ENCODE measurements at regions of chr4 and their contacts with region 1.

Region 1: DNA sequence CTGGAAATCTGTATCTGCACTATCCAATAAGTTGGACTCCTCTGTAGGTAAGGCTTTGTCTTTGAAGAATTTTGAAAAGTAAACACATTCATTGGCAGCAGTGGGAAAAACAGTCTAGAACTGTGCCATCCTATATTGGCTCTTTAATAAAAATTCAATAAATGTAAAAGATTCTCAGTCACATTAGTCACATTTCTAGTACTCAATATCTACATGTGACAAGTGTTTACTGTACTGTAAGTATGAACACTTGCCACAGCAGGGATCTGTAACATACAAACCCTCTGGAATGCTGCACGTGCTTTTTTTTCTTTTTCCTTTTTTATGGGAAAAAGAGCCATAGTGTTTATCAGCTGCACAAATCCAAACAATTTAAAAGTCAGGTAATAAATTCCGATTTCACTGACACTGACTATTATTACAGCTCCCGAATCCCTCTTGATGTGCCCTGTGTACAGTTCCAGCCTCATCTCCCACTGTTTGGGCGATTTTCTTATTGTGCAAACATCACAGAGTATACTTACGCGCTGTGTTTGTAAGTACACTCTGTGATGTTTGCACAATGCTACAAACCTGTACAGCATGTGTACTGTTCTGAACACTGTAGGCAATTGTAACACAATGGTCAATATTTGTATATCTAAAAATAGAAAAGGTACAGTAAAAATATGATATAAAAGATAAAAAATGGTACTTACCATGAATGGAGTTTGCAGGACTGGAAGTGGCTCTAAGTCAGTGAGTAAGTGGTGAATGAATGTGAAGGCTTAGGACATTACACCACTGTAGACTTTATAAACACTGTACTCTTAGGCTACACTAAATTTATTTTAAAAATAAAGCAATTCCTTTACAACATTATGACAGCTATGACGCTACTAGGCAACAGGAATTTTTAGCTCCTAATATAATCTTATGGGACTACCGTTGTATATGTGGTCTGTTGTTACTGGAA is 8.7 kb downstream of the PYURF start:
- DNase-seq: no peak
- ATAC-seq: no peak
- H3K4me3 ChIP-seq: no peak overlapping the region
- H3K4me3 Mint-ChIP-seq: no peak overlapping the region
- H3K27ac ChIP-seq: no peak overlapping the region
- H3K27ac Mint-ChIP-seq: no peak overlapping the region
- H3K4me1 ChIP-seq: no peaks in the 10 kb centered on the region
- H3K4me1 Mint-ChIP-seq: no peaks in the 10 kb centered on the region
- H3K27me3 ChIP-seq: no peaks in the 10 kb centered on the region
- H3K27me3 Mint-ChIP-seq: peaks cover 4% of the 10 kb centered on the region
- CTCF ChIP-seq: no peak

Region 2: GRCh38 chr4:87679449-87680169 is 835.2 kb before region 1 on chr4:
- CTCF ChIA-PET with region 1: interaction called, 5 read pairs
- POLR2A ChIA-PET with region 1: no interaction called
- intact Hi-C with region 1: loop called in 1 of 2 experiments (anchors 10 kb)
- DNase-seq: peak in 7 of 9 experiments; percentile 9 to 57 (median 22)
- ATAC-seq: no peak
- H3K4me3 ChIP-seq: no peak overlapping the region
- H3K4me3 Mint-ChIP-seq: no peak overlapping the region
- H3K27ac ChIP-seq: no peak overlapping the region
- H3K27ac Mint-ChIP-seq: no peak overlapping the region
- H3K4me1 ChIP-seq: no peaks in the 10 kb centered on the region
- H3K4me1 Mint-ChIP-seq: no peaks in the 10 kb centered on the region
- H3K27me3 ChIP-seq: no peaks in the 10 kb centered on the region
- H3K27me3 Mint-ChIP-seq: peaks cover 2% of the 10 kb centered on the region
- CTCF ChIP-seq: peak; percentile 83

Region 3: DNA sequence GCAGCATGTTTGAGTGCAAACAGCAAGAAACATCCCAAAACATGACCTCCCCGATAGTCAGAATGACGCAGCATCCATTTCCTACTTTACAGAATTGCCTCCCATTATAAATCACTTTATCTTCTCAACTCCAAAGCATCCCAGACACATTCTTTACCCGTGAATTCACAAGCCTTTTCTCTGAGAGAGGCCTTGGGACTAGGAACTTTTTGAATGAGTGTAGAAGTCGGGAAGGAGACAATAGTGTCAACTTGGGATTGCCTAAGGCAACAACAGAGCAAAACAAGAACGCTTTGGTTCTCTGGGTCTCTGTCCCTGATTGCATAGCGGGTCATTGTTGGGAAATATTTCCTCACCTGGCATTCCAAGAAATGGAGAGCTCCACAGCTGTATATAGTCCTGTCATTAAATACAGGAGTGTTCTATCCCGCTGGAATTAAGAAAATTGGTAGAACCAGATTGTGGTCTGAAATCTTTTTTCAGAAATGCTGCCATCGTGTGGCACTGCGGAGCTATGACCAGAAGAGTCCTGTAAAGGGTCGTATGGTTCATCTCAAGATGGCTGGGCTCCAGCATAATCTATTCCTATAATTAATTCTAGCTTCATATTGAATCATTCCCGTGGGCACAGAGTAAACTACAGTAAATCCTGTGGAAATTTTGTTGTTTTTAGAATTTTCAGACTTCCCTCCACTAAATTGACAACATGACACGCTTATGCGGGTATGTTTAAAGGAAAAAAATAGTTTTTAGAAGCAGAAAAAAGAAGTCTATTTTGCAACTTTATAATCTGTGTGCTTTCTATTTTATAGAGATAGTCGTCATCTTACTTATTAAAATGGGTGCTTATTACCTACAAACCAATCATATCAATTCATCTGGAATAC is 541.3 kb before region 1 on chr4:
- CTCF ChIA-PET with region 1: interaction called, 4 read pairs
- POLR2A ChIA-PET with region 1: no interaction called
- intact Hi-C with region 1: loop called in 1 of 2 experiments (anchors 10 kb)
- DNase-seq: peak in 5 of 9 experiments; percentile 16 to 53 (median 42)
- ATAC-seq: peak; percentile 74
- H3K4me3 ChIP-seq: no peak overlapping the region
- H3K4me3 Mint-ChIP-seq: no peak overlapping the region
- H3K27ac ChIP-seq: no peak overlapping the region
- H3K27ac Mint-ChIP-seq: no peak overlapping the region
- H3K4me1 ChIP-seq: peaks cover 6% of the 10 kb centered on the region
- H3K4me1 Mint-ChIP-seq: peaks cover 12% of the 10 kb centered on the region
- H3K27me3 ChIP-seq: peaks cover 0 to 4% of the 10 kb centered on the region in 2 experiments
- H3K27me3 Mint-ChIP-seq: peaks cover 27% of the 10 kb centered on the region
- CTCF ChIP-seq: peak; percentile 66

Region 4: GRCh38 chr4:88033309-88033708 is 481.5 kb before region 1 on chr4:
- CTCF ChIA-PET with region 1: no interaction called
- POLR2A ChIA-PET with region 1: no interaction called
- intact Hi-C with region 1: loop called (anchors 1 to 2 kb)
- DNase-seq: peak in 4 of 9 experiments; percentile 19 to 71 (median 44)
- ATAC-seq: no peak
- H3K4me3 ChIP-seq: no peak overlapping the region
- H3K4me3 Mint-ChIP-seq: no peak overlapping the region
- H3K27ac ChIP-seq: no peak overlapping the region
- H3K27ac Mint-ChIP-seq: no peak overlapping the region
- H3K4me1 ChIP-seq: no peaks in the 10 kb centered on the region
- H3K4me1 Mint-ChIP-seq: no peaks in the 10 kb centered on the region
- H3K27me3 ChIP-seq: no peaks in the 10 kb centered on the region
- H3K27me3 Mint-ChIP-seq: no peaks in the 10 kb centered on the region
- CTCF ChIP-seq: peak; percentile 49

Region 5: GRCh38 chr4:88369936-88370335 is 144.9 kb before region 1 on chr4:
- CTCF ChIA-PET with region 1: interaction called, 29 read pairs
- POLR2A ChIA-PET with region 1: interaction called, 4 read pairs
- intact Hi-C with region 1: loop called (anchors 1 to 2 kb)
- DNase-seq: no peak
- ATAC-seq: no peak
- H3K4me3 ChIP-seq: no peak overlapping the region
- H3K4me3 Mint-ChIP-seq: no peak overlapping the region
- H3K27ac ChIP-seq: no peak overlapping the region
- H3K27ac Mint-ChIP-seq: no peak overlapping the region
- H3K4me1 ChIP-seq: no peaks in the 10 kb centered on the region
- H3K4me1 Mint-ChIP-seq: no peaks in the 10 kb centered on the region
- H3K27me3 ChIP-seq: no peaks in the 10 kb centered on the region
- H3K27me3 Mint-ChIP-seq: peaks cover 8% of the 10 kb centered on the region
- CTCF ChIP-seq: no peak

Region 6: DNA sequence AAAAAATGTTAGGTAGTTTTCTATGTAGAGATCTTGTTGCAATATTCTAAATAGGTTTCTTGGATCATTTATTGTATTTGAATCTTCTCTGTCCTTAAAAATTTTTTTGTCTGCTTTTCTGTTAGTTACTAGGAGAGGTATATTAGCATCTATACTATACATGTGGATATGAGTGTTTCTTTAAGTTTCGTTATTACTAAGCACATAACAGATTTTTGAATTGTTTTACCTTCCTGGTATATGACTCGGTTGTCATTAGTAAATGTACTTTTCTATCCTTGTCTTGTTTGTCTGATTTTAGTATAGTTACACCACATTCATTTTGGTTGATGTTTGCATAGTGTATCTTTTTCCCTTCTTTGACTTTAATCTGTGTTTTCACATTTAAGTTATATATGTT is 11.5 kb before region 1 on chr4:
- CTCF ChIA-PET with region 1: interaction called, 19 read pairs
- POLR2A ChIA-PET with region 1: no interaction called
- intact Hi-C with region 1: no loop called
- DNase-seq: no peak
- ATAC-seq: no peak
- H3K4me3 ChIP-seq: no peak overlapping the region
- H3K4me3 Mint-ChIP-seq: no peak overlapping the region
- H3K27ac ChIP-seq: no peak overlapping the region
- H3K27ac Mint-ChIP-seq: no peak overlapping the region
- H3K4me1 ChIP-seq: no peaks in the 10 kb centered on the region
- H3K4me1 Mint-ChIP-seq: no peaks in the 10 kb centered on the region
- H3K27me3 ChIP-seq: no peaks in the 10 kb centered on the region
- H3K27me3 Mint-ChIP-seq: no peaks in the 10 kb centered on the region
- CTCF ChIP-seq: no peak